Right lobe of liver (tissue), 6 donors: ENCODE measurements at regions of chr1 and their contacts with region 1.

Region 1: DNA sequence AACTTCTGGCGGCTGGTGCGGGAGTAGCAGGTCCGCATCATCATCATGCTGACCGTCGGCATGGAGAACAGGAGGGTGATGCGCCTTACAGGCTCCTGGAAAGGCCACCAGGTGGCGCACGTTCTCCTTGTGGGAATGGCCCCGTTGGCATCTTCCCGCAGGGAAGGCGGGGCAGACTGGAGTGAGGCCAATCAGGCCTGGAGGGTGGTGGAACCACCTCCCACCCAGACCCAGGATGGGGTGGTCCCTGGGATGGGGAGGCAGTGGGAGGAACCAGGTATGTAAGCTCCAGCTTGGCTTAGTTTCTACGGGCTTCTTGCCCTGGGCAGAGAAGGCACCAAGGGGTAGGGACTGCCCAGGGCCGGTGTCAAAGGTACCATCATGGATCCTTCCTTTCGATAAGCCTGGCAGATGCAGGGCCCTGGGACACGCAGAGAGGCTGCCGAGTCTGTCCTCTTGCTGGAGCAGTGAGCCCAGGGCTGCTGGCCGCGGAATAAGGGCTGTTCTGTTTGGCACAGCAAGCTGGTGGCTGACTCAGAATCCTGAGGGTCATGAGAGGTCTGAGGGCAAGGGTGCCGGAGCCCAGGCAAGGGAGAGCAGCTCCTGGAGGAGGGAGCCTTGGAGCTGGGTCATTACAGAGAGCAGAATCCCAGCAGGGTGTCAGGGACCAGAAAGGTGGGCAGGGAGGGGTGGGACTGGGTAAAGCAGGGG is 8.7 kb upstream of the LGR6 start:
- DNase-seq: peak; percentile 76 to 85 (median 80)
- ATAC-seq: peak; percentile 75 to 82 (median 80)
- H3K4me3 ChIP-seq: no peak overlapping the region
- H3K27ac ChIP-seq: no peak overlapping the region
- H3K4me1 ChIP-seq: peaks cover 0 to 3% (median 0%) of the 10 kb centered on the region in 4 donors
- H3K27me3 ChIP-seq: no peaks in the 10 kb centered on the region
- CTCF ChIP-seq: peak; percentile 44 to 89 (median 82)
- POLR2A ChIP-seq: no peak

Region 2: DNA sequence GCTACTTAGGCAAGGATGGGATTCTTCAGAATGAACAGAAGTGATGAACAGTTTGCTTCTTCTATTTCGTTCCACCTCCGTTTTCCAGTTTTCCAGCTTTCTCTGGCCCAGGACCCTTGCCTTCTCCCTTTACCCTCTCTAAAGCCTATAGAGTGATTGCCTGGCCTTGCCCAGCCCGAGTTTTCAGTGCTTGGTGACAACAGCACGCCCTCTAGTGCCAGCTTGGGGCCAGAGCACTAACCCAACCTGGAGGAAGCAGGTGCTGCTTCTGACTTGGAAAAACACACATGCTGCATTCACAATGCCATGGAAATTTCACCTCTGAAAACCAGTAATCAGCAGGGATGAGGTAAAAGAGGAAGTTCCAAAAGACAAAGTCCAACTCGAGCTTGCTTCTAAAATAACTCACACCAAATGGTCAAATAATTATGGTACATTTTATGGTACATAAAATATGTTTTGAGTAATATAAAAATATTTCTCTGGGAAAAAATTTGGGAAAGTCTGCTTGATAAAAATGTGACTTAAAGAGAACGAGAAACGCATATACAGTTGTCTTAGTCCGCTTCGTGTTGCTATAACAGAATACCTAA is 130.8 kb after region 1 on chr1:
- intact Hi-C with region 1: loop called (anchors 5 kb)
- DNase-seq: peak; percentile 78 to 83 (median 82)
- ATAC-seq: peak; percentile 89 to 97 (median 94)
- H3K4me3 ChIP-seq: no peak overlapping the region
- H3K27ac ChIP-seq: no peak overlapping the region
- H3K4me1 ChIP-seq: no peaks in the 10 kb centered on the region
- H3K27me3 ChIP-seq: no peaks in the 10 kb centered on the region
- CTCF ChIP-seq: peak; percentile 86 to 96 (median 92)
- POLR2A ChIP-seq: no peak

Region 3: DNA sequence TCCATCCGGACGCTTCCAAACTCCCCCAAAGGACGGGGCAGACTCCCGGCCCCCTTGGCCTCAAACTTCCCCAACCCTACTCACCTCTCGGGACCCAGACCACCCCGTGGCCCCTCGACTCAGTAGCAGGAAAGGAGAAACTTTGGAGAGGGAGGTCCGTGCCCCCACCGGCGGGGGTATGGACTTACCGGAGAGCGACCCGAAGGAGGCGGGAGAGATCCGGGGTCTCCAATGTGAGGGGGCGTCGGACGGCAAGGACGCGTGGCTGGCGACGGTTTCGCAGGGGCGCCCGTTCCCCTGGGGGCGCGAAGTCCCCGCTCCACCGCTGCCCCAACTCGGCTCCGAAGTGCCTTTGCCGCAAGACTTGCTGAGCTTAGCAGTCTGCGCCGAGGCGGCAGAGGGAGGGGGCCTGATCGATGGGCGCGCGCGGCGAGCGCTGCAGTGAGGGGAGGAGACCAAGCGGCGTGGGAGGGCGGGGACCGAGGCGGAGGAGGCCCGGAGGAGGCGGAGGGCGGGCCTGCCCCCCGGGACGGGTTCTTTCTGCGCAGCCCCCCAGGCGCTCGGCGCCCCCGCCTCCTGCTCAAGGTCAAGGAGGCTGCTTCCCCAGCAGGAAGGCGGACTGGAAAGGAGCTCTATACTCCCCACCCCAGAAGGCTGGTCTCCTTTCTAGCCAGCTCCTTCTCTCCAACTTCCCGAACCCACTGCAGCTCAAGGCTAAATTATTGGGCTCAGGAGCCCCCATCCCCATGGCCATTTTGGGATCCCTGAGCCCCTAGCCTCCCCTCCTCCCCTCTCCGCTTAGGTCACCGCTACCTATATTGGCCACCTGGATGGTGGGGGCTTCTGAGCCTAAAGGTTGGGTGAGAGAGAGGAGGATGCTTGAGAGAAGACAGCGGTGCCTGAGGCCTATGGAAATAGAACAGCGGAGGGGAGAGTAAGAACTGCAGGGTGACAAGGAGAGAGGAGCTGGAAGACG is 525.5 kb after region 1 on chr1 and contains the start of gene SYT2:
- intact Hi-C with region 1: loop called in 1 of 2 experiments (anchors 10 kb)
- DNase-seq: peak in 1 of 3 donors; percentile 47
- ATAC-seq: peak; percentile 62 to 69 (median 66)
- H3K4me3 ChIP-seq: peak within 1 kb of the TSS in 2 of 3 donors; percentile 3 to 20
- H3K27ac ChIP-seq: no peak within 1 kb of the TSS
- H3K4me1 ChIP-seq: peaks cover 0 to 12% (median 0%) of the 10 kb centered on the region in 4 donors
- H3K27me3 ChIP-seq: peaks cover 0 to 17% of the 10 kb centered on the region in 2 donors
- CTCF ChIP-seq: no peak
- POLR2A ChIP-seq: no peak
- total RNA-seq, gene SYT2: not detected